ENCODE measurements at regions of chr11 and their contacts with region 1.

Region 1: DNA sequence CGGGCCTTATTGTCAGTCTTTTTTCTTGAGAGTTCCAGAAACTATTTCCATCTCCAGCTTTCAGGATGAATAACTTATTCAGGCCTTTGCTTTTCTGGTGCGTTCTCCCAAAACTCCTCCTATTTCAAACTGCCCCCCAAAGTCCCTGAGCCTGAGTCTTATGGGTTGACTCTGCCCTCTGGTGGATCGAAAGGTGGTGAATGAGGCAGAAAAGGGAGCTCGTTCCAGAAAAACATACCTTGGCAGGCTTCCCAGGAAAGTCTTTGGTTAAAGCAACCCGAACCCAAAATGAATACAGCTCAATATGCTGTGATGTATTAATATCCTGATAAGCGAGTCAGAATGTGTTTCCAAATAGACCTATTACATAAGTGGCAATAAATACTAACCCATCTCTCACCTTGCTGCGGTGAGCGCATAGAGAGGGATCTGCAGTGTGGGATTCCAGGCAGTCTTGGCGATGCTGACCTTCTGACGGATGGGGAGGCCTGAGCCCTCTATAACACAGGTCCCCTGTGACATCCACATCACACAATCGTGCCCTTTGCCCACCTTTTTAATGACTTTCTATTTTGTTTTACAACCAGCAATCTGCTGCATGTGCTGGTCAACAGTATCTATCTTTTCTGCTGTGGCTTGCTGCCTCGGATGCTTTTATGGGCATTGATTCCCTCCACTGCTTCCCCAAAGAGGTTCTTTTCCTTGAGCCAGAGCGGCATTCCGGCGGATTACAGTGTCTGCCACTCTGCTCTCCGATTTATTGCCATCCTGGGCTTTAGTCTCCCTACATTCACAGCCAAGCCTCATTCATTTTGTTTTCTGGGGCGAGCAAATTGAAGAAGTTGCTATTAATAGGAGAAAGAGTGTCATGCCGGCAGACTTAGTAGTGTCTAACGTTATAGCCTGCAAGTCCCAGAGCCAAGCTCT is 756.8 kb downstream of the NTM start:
- DNase-seq: peak; percentile 65 to 77 (median 72)
- ATAC-seq: peak; percentile 75 to 88
- H3K4me3 ChIP-seq: peak overlapping the region; percentile 55
- H3K27ac ChIP-seq: peak overlapping the region; percentile 77
- H3K4me1 ChIP-seq: peaks cover 5% of the 10 kb centered on the region
- H3K27me3 ChIP-seq: no peaks in the 10 kb centered on the region

Region 2: DNA sequence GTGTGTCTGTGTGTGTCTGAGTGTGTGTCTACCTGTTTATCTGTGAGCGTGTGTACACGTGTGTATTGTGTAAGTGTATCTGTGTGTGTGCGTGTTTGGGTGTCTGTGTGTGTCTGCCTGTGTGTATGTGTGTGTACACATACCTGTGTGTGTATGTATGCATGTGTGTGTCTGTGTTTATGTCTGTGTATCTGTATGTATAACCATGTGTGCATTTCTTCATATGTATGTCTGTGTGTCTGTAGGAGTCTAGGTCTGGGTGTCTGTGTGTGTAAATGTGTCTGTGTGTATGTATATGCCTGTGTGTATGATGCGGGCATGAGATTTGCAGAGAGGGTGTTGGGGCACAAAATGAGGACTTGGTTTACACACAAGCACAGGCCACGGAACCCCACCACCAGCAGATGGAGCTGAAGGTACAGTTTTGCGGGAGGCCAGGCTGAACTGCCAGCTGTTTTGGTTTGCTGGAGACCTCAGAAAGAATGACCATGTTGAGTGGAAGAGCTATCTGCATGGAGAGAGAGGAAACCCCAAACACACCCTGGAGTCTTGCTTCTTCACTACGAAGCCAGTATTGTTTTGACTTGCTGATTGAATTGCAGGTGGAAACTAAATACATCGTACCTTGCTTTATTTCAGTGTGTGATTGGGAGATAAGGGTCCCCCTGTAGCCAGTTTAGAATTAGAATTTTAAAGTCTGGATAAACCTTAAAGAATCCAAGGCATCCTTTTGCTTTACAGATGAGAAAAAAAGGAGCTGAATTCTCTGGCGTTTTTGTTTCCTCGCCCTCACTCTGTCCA is 259.6 kb before region 1 on chr11:
- intact Hi-C with region 1: loop called in 2 of 4 experiments (anchors 10 kb)
- DNase-seq: peak; percentile 76 to 89 (median 86)
- ATAC-seq: peak; percentile 76 to 87
- H3K4me3 ChIP-seq: no peak overlapping the region
- H3K27ac ChIP-seq: no peak overlapping the region
- H3K4me1 ChIP-seq: no peaks in the 10 kb centered on the region
- H3K27me3 ChIP-seq: no peaks in the 10 kb centered on the region

Region 3: DNA sequence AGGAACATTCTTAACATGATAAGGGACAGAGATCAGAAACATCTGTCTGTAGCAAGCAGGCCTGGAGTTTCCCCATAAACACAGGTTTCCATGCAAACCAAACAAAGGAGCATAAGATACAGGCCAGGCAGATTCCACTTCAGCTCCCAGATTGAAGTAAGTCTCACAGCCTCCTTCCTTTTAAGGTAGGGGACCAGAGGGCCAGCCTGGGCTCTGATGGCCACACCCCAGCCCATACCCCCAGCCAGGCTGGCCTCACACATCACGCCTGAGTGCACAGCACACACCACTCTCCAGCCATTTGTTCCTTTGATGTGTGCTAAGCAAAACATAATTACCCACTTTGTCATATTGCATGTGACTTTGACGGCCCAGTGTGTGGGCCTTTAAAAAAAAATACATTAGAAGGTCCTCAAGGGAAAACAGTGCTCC is 238.1 kb before region 1 on chr11:
- intact Hi-C with region 1: loop called in 1 of 4 experiments (anchors 10 kb)
- DNase-seq: peak in 2 of 3 donors; percentile 27 to 66
- ATAC-seq: peak; percentile 87 to 92
- H3K4me3 ChIP-seq: no peak overlapping the region
- H3K27ac ChIP-seq: peak overlapping the region; percentile 62
- H3K4me1 ChIP-seq: peaks cover 1% of the 10 kb centered on the region
- H3K27me3 ChIP-seq: no peaks in the 10 kb centered on the region

Region 4: DNA sequence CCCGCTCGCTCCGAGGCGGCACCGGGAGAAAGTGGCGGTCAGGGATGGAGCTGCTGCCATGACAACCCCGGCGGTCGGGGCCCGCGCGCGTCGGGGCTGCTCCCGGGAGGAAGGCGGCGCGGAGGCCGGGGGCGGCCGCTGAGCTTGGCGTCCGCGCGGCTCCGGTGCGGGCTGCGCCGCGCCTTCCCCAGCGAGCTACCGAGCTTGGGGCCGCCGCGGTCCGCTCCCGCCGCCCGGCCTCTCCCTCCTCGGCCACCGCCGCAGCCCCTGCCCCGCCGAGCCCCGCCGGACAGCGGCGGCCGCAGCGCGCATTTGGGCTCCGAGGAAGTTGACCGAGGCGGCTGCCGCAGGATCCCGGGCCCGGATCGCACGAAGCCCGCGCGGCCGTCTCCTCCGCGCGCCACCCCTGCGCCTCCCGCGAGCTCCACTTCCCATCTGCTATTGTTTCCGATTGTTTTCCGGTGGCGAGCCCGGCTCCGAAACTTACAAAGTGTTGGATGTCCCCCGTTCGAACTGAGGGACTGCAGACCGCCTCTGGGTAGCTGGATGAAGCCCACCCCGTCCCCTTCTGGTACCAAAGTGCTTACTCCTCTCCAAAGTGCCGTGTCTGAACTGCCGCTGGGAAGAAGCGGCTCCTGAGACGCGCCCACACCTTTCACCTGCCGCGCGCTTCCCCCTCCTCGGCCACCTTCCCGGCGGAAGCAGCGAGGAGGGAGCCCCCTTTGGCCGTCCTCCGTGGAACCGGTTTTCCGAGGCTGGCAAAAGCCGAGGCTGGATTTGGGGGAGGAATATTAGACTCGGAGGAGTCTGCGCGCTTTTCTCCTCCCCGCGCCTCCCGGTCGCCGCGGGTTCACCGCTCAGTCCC is 216.5 kb before region 1 on chr11:
- intact Hi-C with region 1: loop called in 2 of 4 experiments (anchors 5 kb)
- DNase-seq: peak in 2 of 3 donors; percentile 71 to 74
- ATAC-seq: peak; percentile 38 to 49
- H3K4me3 ChIP-seq: peak overlapping the region; percentile 61
- H3K27ac ChIP-seq: peak overlapping the region; percentile 50
- H3K4me1 ChIP-seq: peaks cover 3% of the 10 kb centered on the region
- H3K27me3 ChIP-seq: no peaks in the 10 kb centered on the region

Region 5: DNA sequence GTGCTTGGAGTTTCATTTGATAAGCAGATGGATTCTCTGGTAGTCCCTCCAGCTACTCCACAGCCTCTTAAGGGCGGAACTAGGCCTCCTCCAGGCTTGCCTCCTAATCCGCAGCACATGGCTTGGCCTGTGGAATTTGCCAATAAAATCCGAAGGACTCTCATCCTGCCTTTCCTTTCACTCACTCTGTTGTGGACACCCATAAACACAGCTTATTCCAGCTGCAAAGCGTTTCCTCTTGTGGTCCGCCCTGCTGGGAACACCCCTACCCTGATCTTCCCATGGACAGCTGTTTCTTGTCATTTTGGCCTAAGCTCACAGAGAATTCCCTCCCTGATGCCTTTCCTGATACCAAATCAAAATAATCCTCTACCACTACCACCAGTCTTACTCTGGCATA is 210.6 kb before region 1 on chr11:
- intact Hi-C with region 1: loop called in 2 of 4 experiments (anchors 5 kb)
- DNase-seq: no peak
- ATAC-seq: no peak
- H3K4me3 ChIP-seq: no peak overlapping the region
- H3K27ac ChIP-seq: no peak overlapping the region
- H3K4me1 ChIP-seq: peaks cover 7% of the 10 kb centered on the region
- H3K27me3 ChIP-seq: no peaks in the 10 kb centered on the region

Region 6: DNA sequence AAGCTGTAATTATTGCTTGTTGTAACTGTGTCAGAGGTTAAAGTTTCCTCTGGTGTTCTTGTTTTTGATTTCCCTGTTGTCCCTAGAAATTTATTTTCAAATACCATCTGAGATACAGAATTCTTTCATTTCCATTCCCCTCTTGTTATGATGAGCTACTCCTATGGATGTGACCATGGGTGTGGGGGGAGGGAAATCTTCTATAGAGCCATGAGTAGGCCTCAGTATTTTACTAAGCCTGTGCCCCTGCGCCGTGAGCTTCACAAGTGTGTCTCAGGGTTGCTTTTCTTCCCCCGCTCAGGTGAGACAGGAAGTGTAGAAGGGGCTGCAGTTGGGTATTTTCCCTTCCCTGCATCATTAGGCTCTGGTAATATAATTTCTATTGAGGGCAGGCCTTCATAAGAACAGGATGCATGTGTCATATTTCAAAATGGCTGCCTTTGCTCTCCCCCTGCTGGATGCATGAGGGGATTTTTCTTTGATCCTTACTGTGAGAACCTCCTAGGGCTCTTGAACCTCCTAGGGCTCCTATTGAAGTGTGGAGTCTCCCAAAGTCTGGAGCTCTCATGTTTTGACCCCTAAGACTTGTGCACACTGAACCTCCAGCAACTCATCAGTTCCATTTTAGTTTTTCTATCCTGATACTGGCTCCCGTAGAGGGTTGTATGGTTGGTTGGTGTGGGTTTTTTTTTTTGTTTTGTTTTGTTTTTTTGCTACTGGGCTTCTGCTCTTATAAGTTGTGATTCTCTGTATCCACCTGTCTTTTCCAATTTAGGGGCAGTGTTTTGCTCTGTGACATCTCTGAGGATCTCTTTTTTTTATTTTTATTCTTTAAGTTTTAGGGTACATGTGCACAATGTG is 98.6 kb before region 1 on chr11:
- intact Hi-C with region 1: loop called in 1 of 4 experiments (anchors 10 kb)
- DNase-seq: peak; percentile 23 to 62 (median 42)
- ATAC-seq: peak; percentile 66 to 72
- H3K4me3 ChIP-seq: no peak overlapping the region
- H3K27ac ChIP-seq: peak overlapping the region; percentile 33
- H3K4me1 ChIP-seq: no peaks in the 10 kb centered on the region
- H3K27me3 ChIP-seq: no peaks in the 10 kb centered on the region

Region 7: DNA sequence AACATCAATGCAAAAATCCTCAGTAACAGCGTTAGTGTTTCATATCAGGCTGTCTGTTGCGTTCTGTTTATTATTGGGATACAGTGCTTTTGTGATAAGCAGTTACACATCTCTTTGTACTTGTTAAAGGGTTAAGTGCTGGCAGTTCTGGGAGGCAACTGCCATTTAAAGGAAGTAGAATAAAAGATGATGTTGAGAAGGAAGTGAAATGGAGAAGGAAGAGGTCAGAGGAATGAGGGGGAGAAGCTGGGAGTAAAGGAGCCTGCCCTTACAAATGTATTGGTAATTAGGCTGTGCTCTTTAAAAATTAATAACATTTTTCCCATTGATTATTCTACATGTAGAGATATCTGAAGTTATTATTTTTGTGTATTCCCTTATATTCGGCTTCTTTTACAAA is 82.1 kb before region 1 on chr11:
- intact Hi-C with region 1: no loop called
- DNase-seq: no peak
- ATAC-seq: no peak
- H3K4me3 ChIP-seq: no peak overlapping the region
- H3K27ac ChIP-seq: no peak overlapping the region
- H3K4me1 ChIP-seq: peaks cover 2% of the 10 kb centered on the region
- H3K27me3 ChIP-seq: no peaks in the 10 kb centered on the region

Region 8: GRCh38 chr11:132312701-132313111 is 185.5 kb after region 1 on chr11:
- intact Hi-C with region 1: loop called in 1 of 4 experiments (anchors 10 kb)
- DNase-seq: no peak
- ATAC-seq: peak in 1 of 2 donors; percentile 28
- H3K4me3 ChIP-seq: no peak overlapping the region
- H3K27ac ChIP-seq: no peak overlapping the region
- H3K4me1 ChIP-seq: no peaks in the 10 kb centered on the region
- H3K27me3 ChIP-seq: no peaks in the 10 kb centered on the region